Natural killer cell (primary cell): ENCODE measurements at regions of chr1 and their contacts with region 1.

Region 1: DNA sequence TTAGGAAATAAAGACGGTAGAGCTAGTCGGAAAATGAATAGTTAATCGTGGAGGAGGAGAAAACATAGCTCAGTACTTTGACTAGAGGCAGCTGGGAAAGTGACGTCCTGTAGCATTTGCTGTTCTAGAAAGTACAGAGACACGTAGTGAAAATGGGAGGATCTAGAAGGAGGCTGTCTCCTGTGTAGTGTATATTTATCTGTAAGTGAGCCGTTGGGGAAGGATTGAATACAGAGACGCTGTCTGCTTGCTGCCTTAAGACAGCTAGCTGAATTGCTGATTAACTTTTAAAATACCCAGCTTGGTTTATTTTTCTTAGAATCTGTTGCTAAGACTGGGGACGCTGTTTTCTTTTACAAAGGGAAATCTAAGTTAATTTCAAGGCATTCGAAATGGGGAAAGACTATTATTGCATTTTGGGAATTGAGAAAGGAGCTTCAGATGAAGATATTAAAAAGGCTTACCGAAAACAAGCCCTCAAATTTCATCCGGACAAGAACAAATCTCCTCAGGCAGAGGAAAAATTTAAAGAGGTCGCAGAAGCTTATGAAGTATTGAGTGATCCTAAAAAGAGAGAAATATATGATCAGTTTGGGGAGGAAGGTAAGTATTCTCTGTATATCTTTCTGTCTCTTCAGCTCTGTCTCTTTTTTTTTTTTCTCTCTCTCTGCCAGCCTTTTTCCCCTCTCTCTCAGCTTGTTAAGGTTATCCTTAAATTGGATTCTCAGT is at the start of gene DNAJB4:
- DNase-seq: peak; percentile 34 to 93
- ATAC-seq: peak; percentile 97 to 99 (median 97)
- H3K4me3 ChIP-seq: peak within 1 kb of the TSS; percentile 93
- H3K4me3 Mint-ChIP-seq: peak within 1 kb of the TSS; percentile 97
- H3K27ac ChIP-seq: peak within 1 kb of the TSS; percentile 82
- H3K27ac Mint-ChIP-seq: peak within 1 kb of the TSS; percentile 92 to 100
- H3K4me1 ChIP-seq: no peaks in the 10 kb centered on the region
- H3K4me1 Mint-ChIP-seq: peaks cover 23 to 33% of the 10 kb centered on the region in 2 donors
- H3K27me3 ChIP-seq: no peaks in the 10 kb centered on the region
- H3K27me3 Mint-ChIP-seq: no peaks in the 10 kb centered on the region
- CTCF ChIP-seq: no peak
- total RNA-seq, gene DNAJB4: 26.8 to 30.7 (median 28.2) TPM

Region 2: DNA sequence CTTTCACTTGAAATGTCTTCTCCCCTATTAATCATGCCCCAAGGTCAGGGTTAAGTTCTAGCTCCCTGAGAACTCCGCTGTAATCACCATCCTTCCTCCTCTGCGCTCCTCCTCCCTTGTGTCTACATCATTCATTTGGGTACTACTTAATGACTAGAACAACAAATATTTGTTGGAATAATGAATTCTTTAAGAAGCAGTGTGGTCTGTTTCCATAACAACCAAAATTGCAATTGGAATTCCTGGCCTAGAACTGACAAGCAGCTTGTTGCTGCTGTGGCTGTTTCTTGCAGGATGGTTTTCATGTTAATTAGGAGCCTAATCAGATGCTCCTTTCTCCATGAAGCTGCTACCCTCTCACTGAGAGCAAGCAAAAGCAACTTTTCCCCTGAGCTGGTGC is 515.0 kb before region 1 on chr1:
- intact Hi-C with region 1: no loop called
- DNase-seq: no peak
- ATAC-seq: no peak
- H3K4me3 ChIP-seq: no peak overlapping the region
- H3K4me3 Mint-ChIP-seq: no peak overlapping the region
- H3K27ac ChIP-seq: no peak overlapping the region
- H3K27ac Mint-ChIP-seq: no peak overlapping the region
- H3K4me1 ChIP-seq: no peaks in the 10 kb centered on the region
- H3K4me1 Mint-ChIP-seq: peaks cover 17 to 23% of the 10 kb centered on the region in 2 donors
- H3K27me3 ChIP-seq: no peaks in the 10 kb centered on the region
- H3K27me3 Mint-ChIP-seq: no peaks in the 10 kb centered on the region
- CTCF ChIP-seq: no peak

Region 3: GRCh38 chr1:77978969-77979876 is 25.7 kb before region 1 on chr1 and contains the start of gene FUBP1:
- intact Hi-C with region 1: loop called (anchors 1 kb)
- DNase-seq: peak; percentile 90 to 100
- ATAC-seq: peak; percentile 76 to 89 (median 77)
- H3K4me3 ChIP-seq: peak within 1 kb of the TSS; percentile 87
- H3K4me3 Mint-ChIP-seq: no peak within 1 kb of the TSS
- H3K27ac ChIP-seq: peak within 1 kb of the TSS; percentile 93
- H3K27ac Mint-ChIP-seq: no peak within 1 kb of the TSS
- H3K4me1 ChIP-seq: peaks cover 18% of the 10 kb centered on the region
- H3K4me1 Mint-ChIP-seq: peaks cover 28 to 39% of the 10 kb centered on the region in 2 donors
- H3K27me3 ChIP-seq: no peaks in the 10 kb centered on the region
- H3K27me3 Mint-ChIP-seq: no peaks in the 10 kb centered on the region
- CTCF ChIP-seq: peak; percentile 65
- total RNA-seq, gene FUBP1: 247 to 285 (median 249) TPM

Region 4: GRCh38 chr1:78038491-78038939 is 33.6 kb after region 1 on chr1:
- intact Hi-C with region 1: no loop called
- DNase-seq: no peak
- ATAC-seq: no peak
- H3K4me3 ChIP-seq: no peak overlapping the region
- H3K4me3 Mint-ChIP-seq: no peak overlapping the region
- H3K27ac ChIP-seq: no peak overlapping the region
- H3K27ac Mint-ChIP-seq: no peak overlapping the region
- H3K4me1 ChIP-seq: no peaks in the 10 kb centered on the region
- H3K4me1 Mint-ChIP-seq: peaks cover 9 to 10% of the 10 kb centered on the region in 2 donors
- H3K27me3 ChIP-seq: peaks cover 2% of the 10 kb centered on the region
- H3K27me3 Mint-ChIP-seq: peaks cover 3 to 24% of the 10 kb centered on the region in 2 donors
- CTCF ChIP-seq: no peak